IMR-90 (cell line): ENCODE measurements at regions of chr4 and their contacts with region 1.

Region 1: GRCh38 chr4:168710353-168710946 is 213.6 kb downstream of the PALLD start:
- DNase-seq: peak; percentile 79
- ATAC-seq: peak; percentile 77
- H3K4me3 ChIP-seq: no peak overlapping the region
- H3K27ac ChIP-seq: no peak overlapping the region
- H3K4me1 ChIP-seq: peaks cover 11% of the 10 kb centered on the region
- H3K27me3 ChIP-seq: no peaks in the 10 kb centered on the region
- CTCF ChIP-seq: peak; percentile 71
- POLR2A ChIP-seq: no peak
- RAD21 ChIP-seq: peak; percentile 80

Region 2: DNA sequence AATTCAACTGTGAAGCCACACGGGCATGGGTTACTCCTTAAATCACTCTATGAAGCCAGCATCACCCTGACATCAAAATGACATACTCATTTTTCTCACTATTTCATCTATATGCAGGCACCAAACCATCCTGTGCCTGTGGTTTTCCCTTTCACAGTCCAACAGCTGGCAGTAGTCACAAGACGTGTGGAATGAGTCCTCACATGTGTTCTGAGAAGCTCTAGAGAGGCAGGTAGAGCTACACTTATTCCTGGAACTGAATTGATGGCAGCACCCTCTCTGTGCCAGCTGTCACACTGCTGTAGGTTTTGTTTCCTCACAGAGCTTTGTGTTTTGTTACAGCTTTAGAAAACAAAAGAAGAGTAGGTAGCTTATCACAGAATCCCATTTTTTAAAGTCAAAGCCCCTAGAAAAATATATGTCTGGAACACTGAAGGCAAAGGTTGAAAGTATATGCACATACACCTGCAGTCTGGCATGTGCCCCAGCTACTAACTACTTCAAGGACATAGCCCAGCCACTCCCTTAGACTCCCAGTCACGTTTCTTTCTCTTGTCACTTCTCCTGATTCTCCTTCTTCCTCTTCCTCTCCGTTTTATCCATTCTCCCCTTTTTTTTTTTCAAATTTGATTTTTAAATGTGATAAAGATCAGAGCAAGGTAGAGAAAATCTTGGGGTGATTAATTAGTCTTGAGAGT is 511.0 kb before region 1 on chr4:
- CTCF ChIA-PET with region 1: no interaction called
- POLR2A ChIA-PET with region 1: no interaction called
- dilution Hi-C with region 1: no loop called
- in situ Hi-C with region 1: no loop called
- intact Hi-C with region 1: no loop called
- DNase-seq: no peak
- ATAC-seq: no peak
- H3K4me3 ChIP-seq: no peak overlapping the region
- H3K27ac ChIP-seq: no peak overlapping the region
- H3K4me1 ChIP-seq: no peaks in the 10 kb centered on the region; the same call in 1 of the 2 replicates
- H3K27me3 ChIP-seq: no peaks in the 10 kb centered on the region
- CTCF ChIP-seq: no peak
- POLR2A ChIP-seq: no peak
- RAD21 ChIP-seq: no peak

Region 3: DNA sequence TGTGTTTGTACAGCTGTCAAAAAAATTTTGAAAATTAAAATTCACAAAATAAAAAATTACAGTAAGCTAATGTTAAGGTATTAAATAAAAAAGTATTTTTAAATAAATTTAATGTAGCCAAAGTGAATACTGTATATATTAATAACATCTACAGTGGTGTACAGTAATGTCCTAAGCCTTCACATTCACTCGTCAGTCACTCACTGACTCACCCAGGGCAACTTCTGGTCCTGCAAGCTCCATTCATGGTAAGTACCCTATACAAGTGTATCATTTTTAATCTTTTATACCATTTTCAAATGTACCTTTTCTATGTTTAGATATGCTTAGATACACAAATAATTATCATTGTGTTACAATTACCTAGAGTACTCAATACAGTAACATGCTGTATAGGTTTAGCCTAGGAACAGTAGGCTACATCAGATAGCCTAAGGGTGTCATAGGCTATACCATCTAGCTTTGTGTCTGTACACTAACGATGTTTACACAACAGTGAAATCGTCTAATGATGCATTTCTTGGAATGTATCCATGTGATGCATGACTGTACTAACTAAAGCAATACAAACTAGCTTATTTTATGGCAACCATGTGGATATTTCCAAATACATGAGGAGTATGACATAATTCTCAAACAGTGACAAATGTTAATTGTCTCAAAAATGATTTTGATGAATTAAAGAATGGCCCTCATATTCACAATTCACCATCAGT is 405.5 kb before region 1 on chr4:
- CTCF ChIA-PET with region 1: no interaction called
- POLR2A ChIA-PET with region 1: no interaction called
- dilution Hi-C with region 1: no loop called
- in situ Hi-C with region 1: no loop called
- intact Hi-C with region 1: no loop called
- DNase-seq: peak; percentile 80
- ATAC-seq: peak; percentile 74
- H3K4me3 ChIP-seq: no peak overlapping the region
- H3K27ac ChIP-seq: no peak overlapping the region
- H3K4me1 ChIP-seq: no peaks in the 10 kb centered on the region
- H3K27me3 ChIP-seq: no peaks in the 10 kb centered on the region
- CTCF ChIP-seq: no peak
- POLR2A ChIP-seq: no peak
- RAD21 ChIP-seq: no peak

Region 4: GRCh38 chr4:168524006-168524405 is 186.4 kb before region 1 on chr4:
- CTCF ChIA-PET with region 1: no interaction called
- POLR2A ChIA-PET with region 1: no interaction called
- dilution Hi-C with region 1: no loop called
- in situ Hi-C with region 1: no loop called
- intact Hi-C with region 1: loop called (anchors 5 kb)
- DNase-seq: peak; percentile 88
- ATAC-seq: peak; percentile 52
- H3K4me3 ChIP-seq: no peak overlapping the region
- H3K27ac ChIP-seq: no peak overlapping the region
- H3K4me1 ChIP-seq: peaks cover 13% of the 10 kb centered on the region
- H3K27me3 ChIP-seq: no peaks in the 10 kb centered on the region
- CTCF ChIP-seq: no peak
- POLR2A ChIP-seq: no peak
- RAD21 ChIP-seq: no peak

Region 5: DNA sequence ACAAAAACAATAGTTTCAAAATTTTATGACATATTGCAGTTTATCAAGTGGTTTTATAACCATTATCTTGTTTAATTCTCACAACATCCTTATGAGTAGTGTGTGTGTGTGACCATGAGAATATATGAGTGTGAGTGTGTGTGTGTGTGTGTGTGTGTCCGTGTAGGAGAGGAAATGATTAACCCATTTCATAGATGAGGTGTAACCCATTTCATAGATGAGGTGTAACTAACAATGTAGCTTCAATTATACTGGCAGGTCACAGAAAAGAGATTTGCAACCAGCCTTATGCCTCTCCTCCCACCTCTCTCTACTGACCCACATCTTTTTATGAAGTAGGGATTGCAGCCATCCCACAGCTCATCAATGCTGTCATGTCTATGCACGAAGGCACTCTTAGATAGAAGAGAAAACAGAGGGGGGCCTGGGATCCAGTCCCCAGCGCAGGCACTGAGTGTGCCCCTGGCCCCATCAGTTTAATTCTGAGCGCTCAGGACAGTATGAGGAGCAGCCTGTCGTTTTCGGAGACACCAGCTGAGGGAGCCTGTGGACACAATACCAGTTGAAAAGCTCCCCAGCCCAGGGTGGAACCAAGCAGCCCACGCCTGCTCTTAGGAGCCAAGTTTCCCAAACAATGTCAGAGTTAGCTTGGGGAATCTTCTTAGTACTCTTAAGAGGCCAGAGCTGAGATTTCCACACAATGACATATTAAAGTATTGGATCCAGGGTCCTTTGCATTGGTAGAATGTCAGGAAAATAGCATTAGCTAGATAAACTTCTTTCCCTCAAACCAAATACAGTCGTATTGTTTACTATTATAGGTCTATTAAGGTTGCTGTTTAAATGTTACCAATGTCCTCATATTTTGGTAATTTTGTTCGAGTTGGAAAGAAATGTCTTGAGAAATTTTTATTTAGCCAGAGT is 125.0 kb before region 1 on chr4:
- CTCF ChIA-PET with region 1: interaction called, 10 read pairs
- POLR2A ChIA-PET with region 1: no interaction called
- dilution Hi-C with region 1: no loop called
- in situ Hi-C with region 1: no loop called
- intact Hi-C with region 1: loop called (anchors 2 kb)
- DNase-seq: peak; percentile 82
- ATAC-seq: peak; percentile 87
- H3K4me3 ChIP-seq: no peak overlapping the region
- H3K27ac ChIP-seq: no peak overlapping the region
- H3K4me1 ChIP-seq: peaks cover 18% of the 10 kb centered on the region
- H3K27me3 ChIP-seq: no peaks in the 10 kb centered on the region
- CTCF ChIP-seq: peak; percentile 76
- POLR2A ChIP-seq: no peak
- RAD21 ChIP-seq: peak; percentile 88

Region 6: DNA sequence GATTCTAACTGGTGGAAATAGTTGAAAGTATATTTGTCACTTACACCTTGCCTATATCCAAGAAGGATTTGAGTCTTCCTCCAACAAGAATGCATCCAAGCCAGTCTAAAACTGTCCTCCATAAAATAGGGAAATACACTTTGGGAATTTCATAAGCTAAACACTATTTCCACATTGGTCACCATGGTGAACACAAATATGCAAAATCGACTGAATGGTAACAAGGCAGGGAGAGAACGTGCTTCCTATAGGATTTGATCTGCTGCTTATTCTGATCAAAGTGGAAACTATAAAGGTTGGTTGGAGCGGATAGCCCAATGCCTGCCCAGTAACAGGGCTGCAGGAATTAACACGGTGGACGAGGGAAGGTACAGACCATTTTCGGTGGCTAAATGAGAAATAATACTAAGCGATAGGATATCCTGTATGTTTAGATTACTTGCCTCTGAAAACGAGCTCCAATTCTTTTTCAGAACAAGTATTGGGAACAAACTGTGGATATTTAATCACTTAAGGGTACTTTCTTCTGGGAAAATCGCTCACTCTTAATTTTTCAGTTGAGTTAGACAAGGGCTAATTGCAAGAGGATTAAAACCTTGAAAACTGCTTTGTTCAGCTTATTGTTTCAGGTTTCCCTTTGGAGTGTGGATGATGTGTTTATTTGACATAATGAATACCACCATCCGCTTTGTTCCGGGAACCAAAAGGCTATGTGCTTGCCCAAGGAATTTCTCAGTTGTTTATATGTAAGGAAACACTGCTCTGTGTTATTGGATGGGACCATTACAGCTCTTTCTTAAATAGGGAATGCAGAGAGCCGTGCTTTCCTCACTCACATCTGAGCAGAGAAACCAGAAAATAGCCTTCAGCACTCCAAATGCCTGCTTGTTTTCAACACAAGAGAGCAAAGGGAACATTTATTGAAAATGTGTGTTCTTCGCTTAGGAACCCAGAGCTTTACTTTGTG is 105.2 kb after region 1 on chr4:
- CTCF ChIA-PET with region 1: interaction called, 4 read pairs
- POLR2A ChIA-PET with region 1: interaction called, 3 read pairs
- dilution Hi-C with region 1: no loop called
- in situ Hi-C with region 1: no loop called
- intact Hi-C with region 1: loop called (anchors 1 kb)
- DNase-seq: peak; percentile 87
- ATAC-seq: peak; percentile 69
- H3K4me3 ChIP-seq: peak overlapping the region; percentile 5; the same call in 1 of the 2 replicates
- H3K27ac ChIP-seq: peak overlapping the region; percentile 92
- H3K4me1 ChIP-seq: peaks cover 19% of the 10 kb centered on the region
- H3K27me3 ChIP-seq: no peaks in the 10 kb centered on the region
- CTCF ChIP-seq: no peak
- POLR2A ChIP-seq: peak; percentile 73
- RAD21 ChIP-seq: 0 out of 2 replicates have a peak, but pooled peaks have one; percentile 5

Region 7: GRCh38 chr4:168841000-168841671 is 130.7 kb after region 1 on chr4:
- CTCF ChIA-PET with region 1: no interaction called
- POLR2A ChIA-PET with region 1: interaction called, 22 read pairs
- dilution Hi-C with region 1: no loop called
- in situ Hi-C with region 1: no loop called
- intact Hi-C with region 1: loop called (anchors 5 kb)
- DNase-seq: no peak
- ATAC-seq: no peak
- H3K4me3 ChIP-seq: no peak overlapping the region
- H3K27ac ChIP-seq: peak overlapping the region; percentile 21; the same call in 1 of the 2 replicates
- H3K4me1 ChIP-seq: peaks cover 38% of the 10 kb centered on the region
- H3K27me3 ChIP-seq: no peaks in the 10 kb centered on the region
- CTCF ChIP-seq: no peak
- POLR2A ChIP-seq: no peak
- RAD21 ChIP-seq: no peak

Region 8: DNA sequence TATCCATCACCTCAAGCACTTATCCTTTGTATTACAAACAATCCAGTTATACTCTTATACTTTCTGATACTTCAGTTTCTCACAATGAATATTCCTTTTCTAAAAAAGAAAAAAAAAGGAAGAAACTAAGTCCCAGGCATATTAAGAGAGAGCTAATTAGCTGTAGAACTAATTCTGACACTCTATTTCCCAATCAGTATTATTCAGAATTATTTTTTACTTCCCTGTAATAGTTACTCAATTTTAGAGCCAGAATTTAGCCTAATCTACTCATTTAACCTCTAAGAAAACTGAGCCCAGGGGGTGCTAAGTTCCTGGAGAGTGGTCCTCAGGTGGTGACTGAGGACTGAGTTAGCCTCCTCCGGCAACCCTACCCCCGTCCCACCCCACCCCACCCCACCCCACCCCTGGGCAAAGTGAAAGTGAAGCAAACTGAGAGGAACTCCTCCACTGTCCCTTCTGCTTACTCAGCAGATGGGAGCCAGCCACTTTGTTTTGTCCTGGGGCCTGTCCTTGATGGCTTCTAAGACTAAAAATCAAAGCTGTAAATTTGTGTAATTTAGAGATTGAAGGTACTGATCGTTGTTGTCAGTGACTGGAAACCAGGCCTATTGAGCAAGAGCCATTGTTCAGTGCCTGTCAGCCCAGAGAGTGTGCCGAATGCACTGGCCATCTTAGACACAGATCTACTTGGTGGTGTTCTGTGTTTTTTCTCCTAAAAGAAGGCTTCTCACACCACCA is 137.5 kb after region 1 on chr4:
- CTCF ChIA-PET with region 1: interaction called, 4 read pairs
- POLR2A ChIA-PET with region 1: no interaction called
- dilution Hi-C with region 1: no loop called
- in situ Hi-C with region 1: no loop called
- intact Hi-C with region 1: loop called (anchors 5 kb)
- DNase-seq: no peak
- ATAC-seq: peak; percentile 28
- H3K4me3 ChIP-seq: peak overlapping the region; percentile 24; the same call in 1 of the 2 replicates
- H3K27ac ChIP-seq: peak overlapping the region; percentile 69
- H3K4me1 ChIP-seq: peaks cover 25% of the 10 kb centered on the region
- H3K27me3 ChIP-seq: no peaks in the 10 kb centered on the region
- CTCF ChIP-seq: no peak
- POLR2A ChIP-seq: no peak
- RAD21 ChIP-seq: no peak

Region 9: DNA sequence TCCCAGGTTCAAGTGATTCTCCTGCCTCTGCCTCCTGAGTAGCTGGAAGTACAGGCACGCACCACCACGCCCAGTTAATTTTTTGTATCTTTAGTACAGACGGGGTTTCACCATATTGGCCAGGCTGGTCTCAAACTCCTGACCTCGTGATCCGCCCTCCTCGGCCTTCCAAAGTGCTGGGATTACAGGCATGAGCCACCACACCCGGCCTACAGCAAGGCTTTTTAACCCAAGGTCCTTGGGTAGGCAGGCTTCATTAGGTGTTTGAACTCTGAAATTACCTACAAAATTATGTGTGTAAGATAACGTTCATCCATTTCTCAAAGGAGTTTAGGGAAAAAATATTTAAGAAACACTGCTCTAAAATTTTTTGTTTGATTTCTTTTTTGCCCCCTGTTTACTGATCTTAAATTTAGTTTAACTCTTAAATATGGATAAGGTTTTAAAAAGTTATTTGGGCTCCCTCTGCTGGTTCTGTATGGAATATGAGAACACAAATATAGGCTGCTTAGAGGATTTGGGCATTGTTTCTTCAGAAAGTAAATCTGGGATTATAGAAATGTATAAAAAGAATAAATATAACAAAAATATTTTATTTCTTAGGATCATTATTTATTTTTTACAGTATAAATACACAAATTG is 206.8 kb after region 1 on chr4:
- CTCF ChIA-PET with region 1: no interaction called
- POLR2A ChIA-PET with region 1: interaction called, 3 read pairs
- dilution Hi-C with region 1: no loop called
- in situ Hi-C with region 1: loop called (anchors 5 kb)
- intact Hi-C with region 1: loop called (anchors 2 kb)
- DNase-seq: peak; percentile 54
- ATAC-seq: peak; percentile 46
- H3K4me3 ChIP-seq: no peak overlapping the region
- H3K27ac ChIP-seq: no peak overlapping the region
- H3K4me1 ChIP-seq: peaks cover 2% of the 10 kb centered on the region; the same call in 1 of the 2 replicates
- H3K27me3 ChIP-seq: no peaks in the 10 kb centered on the region
- CTCF ChIP-seq: peak; percentile 52
- POLR2A ChIP-seq: no peak
- RAD21 ChIP-seq: peak; percentile 50